Ovary (tissue), 10 donors: ENCODE measurements at regions of chr5 and their contacts with region 1.

Region 1: DNA sequence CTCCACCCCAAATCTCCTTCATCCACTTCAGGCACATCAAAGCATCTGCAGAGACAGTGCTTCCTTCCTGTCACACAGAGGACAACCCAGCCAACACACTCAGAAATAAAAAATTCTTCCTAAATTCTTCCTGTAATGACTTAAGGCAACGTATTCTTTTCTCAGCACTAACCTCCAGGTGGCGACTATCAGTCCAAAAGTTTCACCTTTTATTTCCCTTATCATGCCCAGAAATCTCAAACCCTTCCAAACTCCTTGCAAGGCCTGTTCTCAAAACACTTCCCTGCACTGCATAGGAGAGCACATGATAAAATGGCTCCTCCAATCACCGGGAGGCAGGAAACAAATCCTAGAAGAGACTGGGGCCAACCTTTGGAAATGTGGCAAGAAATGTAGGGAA is 35.1 kb downstream of the SLIT3 start:
- DNase-seq: no peak
- H3K4me3 ChIP-seq: no peak overlapping the region
- H3K27ac ChIP-seq: no peak overlapping the region
- H3K4me1 ChIP-seq: no peaks in the 10 kb centered on the region
- H3K27me3 ChIP-seq: no peaks in the 10 kb centered on the region
- CTCF ChIP-seq: no peak
- EP300 ChIP-seq: no peak
- POLR2A ChIP-seq: no peak

Region 2: GRCh38 chr5:169243651-169244422 is 22.1 kb before region 1 on chr5:
- intact Hi-C with region 1: loop called in 1 of 4 experiments (anchors 1 kb)
- DNase-seq: no peak
- H3K4me3 ChIP-seq: no peak overlapping the region
- H3K27ac ChIP-seq: no peak overlapping the region
- H3K4me1 ChIP-seq: no peaks in the 10 kb centered on the region
- H3K27me3 ChIP-seq: no peaks in the 10 kb centered on the region
- CTCF ChIP-seq: no peak
- EP300 ChIP-seq: no peak
- POLR2A ChIP-seq: no peak